PC-9 (cell line): ENCODE measurements at regions of chr17 and their contacts with region 1.

Region 1: GRCh38 chr17:59296771-59297500 is 34.5 kb upstream of the YPEL2 start:
- DNase-seq: peak; percentile 18 to 92
- H3K4me3 ChIP-seq: peak overlapping the region; percentile 26; the same call in 1 of the 2 replicates
- H3K27ac ChIP-seq: peak overlapping the region; percentile 89
- H3K4me1 ChIP-seq: peaks cover 51% of the 10 kb centered on the region
- H3K27me3 ChIP-seq: no peaks in the 10 kb centered on the region
- CTCF ChIP-seq: no peak

Region 2: DNA sequence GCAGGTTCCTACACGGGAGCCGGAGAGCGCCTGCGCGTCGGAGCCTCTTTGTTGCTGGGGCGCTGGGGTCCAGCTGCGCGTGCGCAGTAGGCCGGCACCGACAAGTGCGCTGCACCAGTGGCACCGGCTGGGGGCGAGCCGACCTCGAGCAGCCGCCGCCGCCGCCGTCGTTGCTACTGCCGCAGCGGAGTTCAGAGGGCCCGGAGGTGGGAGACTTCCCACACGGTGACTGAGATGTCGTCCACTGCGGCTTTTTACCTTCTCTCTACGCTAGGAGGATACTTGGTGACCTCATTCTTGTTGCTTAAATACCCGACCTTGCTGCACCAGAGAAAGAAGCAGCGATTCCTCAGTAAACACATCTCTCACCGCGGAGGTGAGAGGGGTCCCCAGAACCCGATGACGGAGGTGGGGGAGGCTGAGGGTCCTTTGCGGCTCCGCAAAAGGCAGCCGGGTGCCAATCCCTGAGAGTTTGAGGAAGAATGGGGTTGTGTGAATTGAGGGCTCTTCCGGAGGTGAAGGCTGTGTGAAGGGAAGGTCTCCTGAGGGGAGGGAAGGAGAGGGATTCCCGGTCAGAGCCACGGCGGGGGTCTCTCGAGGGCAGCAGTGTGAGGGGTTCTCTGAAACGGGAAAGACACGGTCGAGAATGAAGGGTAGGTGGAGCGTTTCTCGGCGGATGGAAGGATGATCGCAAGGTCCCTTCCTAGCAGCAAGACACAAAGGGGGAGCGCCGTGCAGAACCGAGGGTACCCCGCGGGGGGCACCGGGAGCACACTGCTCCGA is 76.4 kb before region 1 on chr17 and contains the start of gene GDPD1:
- CTCF ChIA-PET with region 1: interaction called, 3 read pairs
- POLR2A ChIA-PET with region 1: no interaction called
- intact Hi-C with region 1: loop called (anchors 2 kb)
- DNase-seq: peak; percentile 91 to 97
- H3K4me3 ChIP-seq: peak within 1 kb of the TSS; percentile 97
- H3K27ac ChIP-seq: peak within 1 kb of the TSS; percentile 57
- H3K4me1 ChIP-seq: peaks cover 23% of the 10 kb centered on the region
- H3K27me3 ChIP-seq: no peaks in the 10 kb centered on the region
- CTCF ChIP-seq: peak; percentile 77
- total RNA-seq, gene GDPD1: 3.1 and 3.4 TPM in 2 replicates

Region 3: DNA sequence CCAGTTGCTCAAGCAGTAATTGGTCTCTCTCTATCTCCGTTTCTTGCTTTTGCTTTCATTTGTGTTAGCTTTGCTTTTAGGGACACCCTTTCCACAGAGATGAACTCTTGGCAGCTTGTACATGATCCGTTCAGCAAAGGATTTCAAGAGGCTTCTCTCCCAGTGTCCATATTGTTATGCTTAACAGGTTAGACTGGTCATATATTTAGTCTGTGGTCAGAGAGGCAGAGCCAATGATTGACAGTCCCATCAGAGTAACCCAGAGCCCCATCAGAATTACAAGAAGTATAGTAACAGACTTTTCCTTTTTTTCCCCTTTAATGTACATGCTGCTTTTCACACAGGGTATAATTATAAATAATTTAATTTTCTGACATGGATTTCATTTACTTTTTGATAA is 42.2 kb before region 1 on chr17:
- CTCF ChIA-PET with region 1: interaction called, 3 read pairs
- POLR2A ChIA-PET with region 1: no interaction called
- intact Hi-C with region 1: loop called (anchors 2 kb)
- DNase-seq: peak; percentile 4 to 70
- H3K4me3 ChIP-seq: no peak overlapping the region
- H3K27ac ChIP-seq: no peak overlapping the region
- H3K4me1 ChIP-seq: peaks cover 26% of the 10 kb centered on the region
- H3K27me3 ChIP-seq: no peaks in the 10 kb centered on the region
- CTCF ChIP-seq: no peak

Region 4: GRCh38 chr17:59266751-59267150 is 30.2 kb before region 1 on chr17:
- CTCF ChIA-PET with region 1: no interaction called
- POLR2A ChIA-PET with region 1: no interaction called
- intact Hi-C with region 1: no loop called
- DNase-seq: no peak
- H3K4me3 ChIP-seq: no peak overlapping the region
- H3K27ac ChIP-seq: no peak overlapping the region
- H3K4me1 ChIP-seq: no peaks in the 10 kb centered on the region
- H3K27me3 ChIP-seq: no peaks in the 10 kb centered on the region
- CTCF ChIP-seq: no peak